CD8-positive, alpha-beta memory T cell (primary cell): ENCODE measurements at regions of chr22 and their contacts with region 1.

Region 1: GRCh38 chr22:46013460-46014416 is 36.8 kb upstream of the WNT7B start:
- DNase-seq: peak; percentile 65 to 90 (median 67)
- H3K4me3 ChIP-seq: peak overlapping the region; percentile 77
- H3K4me3 Mint-ChIP-seq: peak overlapping the region; percentile 88 to 96 (median 90)
- H3K27ac ChIP-seq: peak overlapping the region; percentile 87
- H3K27ac Mint-ChIP-seq: peak overlapping the region; percentile 55 to 99 (median 90)
- H3K4me1 ChIP-seq: peaks cover 5% of the 10 kb centered on the region
- H3K4me1 Mint-ChIP-seq: peaks cover 2 to 12% (median 4%) of the 10 kb centered on the region in 3 donors
- H3K27me3 ChIP-seq: no peaks in the 10 kb centered on the region
- H3K27me3 Mint-ChIP-seq: no peaks in the 10 kb centered on the region

Region 2: GRCh38 chr22:45994491-45995404 is 19.0 kb before region 1 on chr22:
- CTCF ChIA-PET with region 1: interaction called, 68 read pairs
- POLR2A ChIA-PET with region 1: no interaction called
- DNase-seq: peak; percentile 52 to 80 (median 71)
- H3K4me3 ChIP-seq: no peak overlapping the region
- H3K4me3 Mint-ChIP-seq: peak overlapping the region in 1 of 7 donors; percentile 51
- H3K27ac ChIP-seq: no peak overlapping the region
- H3K27ac Mint-ChIP-seq: peak overlapping the region in 6 of 8 donors; percentile 24 to 81 (median 69)
- H3K4me1 ChIP-seq: no peaks in the 10 kb centered on the region
- H3K4me1 Mint-ChIP-seq: peaks cover 6 to 11% (median 9%) of the 10 kb centered on the region in 3 donors
- H3K27me3 ChIP-seq: no peaks in the 10 kb centered on the region
- H3K27me3 Mint-ChIP-seq: peaks cover 5 to 6% of the 10 kb centered on the region in 2 donors

Region 3: DNA sequence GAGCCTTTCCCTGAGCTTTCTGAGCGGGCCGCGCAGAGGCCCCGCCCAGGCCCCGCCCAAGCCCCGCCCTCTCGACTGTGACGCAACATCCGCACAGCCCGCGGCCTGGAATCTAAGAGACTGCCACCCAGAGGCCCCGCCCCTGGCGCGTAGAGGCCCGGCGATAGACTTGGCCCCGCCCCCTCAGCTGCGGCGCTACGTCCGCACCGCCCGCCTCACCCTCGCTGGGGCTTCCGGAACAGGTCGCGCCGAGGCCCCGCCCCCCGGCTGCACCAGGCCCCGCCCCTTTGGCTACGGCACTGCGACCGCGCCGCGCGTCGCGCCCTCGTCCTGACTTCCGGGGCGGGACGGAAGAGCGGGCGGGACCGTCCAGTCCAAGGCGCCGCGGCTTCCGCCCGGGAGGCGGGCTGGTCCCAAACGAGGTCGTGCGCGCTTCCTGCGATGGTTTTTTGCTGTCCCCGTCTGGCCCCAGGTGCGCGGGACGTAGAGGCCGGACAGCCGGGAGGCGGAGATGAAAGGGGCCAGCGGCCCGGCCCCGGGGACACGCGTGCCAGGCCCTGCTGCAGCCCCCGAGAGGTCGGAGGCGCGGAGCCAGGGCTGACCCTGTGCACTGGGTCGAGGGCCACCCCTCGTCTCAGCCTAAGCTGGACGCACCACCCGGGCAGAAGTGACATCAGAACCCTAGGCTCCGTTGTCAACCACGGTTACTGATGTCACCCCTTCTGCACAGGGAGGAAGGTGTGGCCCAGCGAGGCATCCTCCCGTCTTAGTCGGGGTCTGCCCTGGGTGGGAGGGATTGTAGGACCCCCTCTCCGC is 22.2 kb after region 1 on chr22:
- CTCF ChIA-PET with region 1: interaction called, 41 read pairs
- POLR2A ChIA-PET with region 1: interaction called, 39 read pairs
- DNase-seq: peak; percentile 99 to 100 (median 100)
- H3K4me3 ChIP-seq: peak overlapping the region; percentile 76
- H3K4me3 Mint-ChIP-seq: peak overlapping the region; percentile 81 to 91 (median 85)
- H3K27ac ChIP-seq: peak overlapping the region; percentile 89
- H3K27ac Mint-ChIP-seq: peak overlapping the region; percentile 94 to 98 (median 97)
- H3K4me1 ChIP-seq: peaks cover 20% of the 10 kb centered on the region
- H3K4me1 Mint-ChIP-seq: peaks cover 19 to 21% (median 19%) of the 10 kb centered on the region in 3 donors
- H3K27me3 ChIP-seq: no peaks in the 10 kb centered on the region
- H3K27me3 Mint-ChIP-seq: no peaks in the 10 kb centered on the region

Region 4: GRCh38 chr22:46054091-46055073 is 40.6 kb after region 1 on chr22:
- CTCF ChIA-PET with region 1: interaction called, 13 read pairs
- POLR2A ChIA-PET with region 1: interaction called, 3 read pairs
- DNase-seq: peak in 4 of 5 donors; percentile 23 to 63 (median 55)
- H3K4me3 ChIP-seq: peak overlapping the region; percentile 76
- H3K4me3 Mint-ChIP-seq: peak overlapping the region; percentile 85 to 90 (median 88)
- H3K27ac ChIP-seq: peak overlapping the region; percentile 47
- H3K27ac Mint-ChIP-seq: peak overlapping the region; percentile 87 to 95 (median 90)
- H3K4me1 ChIP-seq: peaks cover 57% of the 10 kb centered on the region
- H3K4me1 Mint-ChIP-seq: peaks cover 36 to 63% (median 43%) of the 10 kb centered on the region in 3 donors
- H3K27me3 ChIP-seq: no peaks in the 10 kb centered on the region
- H3K27me3 Mint-ChIP-seq: peaks cover under 1 to 3% of the 10 kb centered on the region in 2 donors

Region 5: DNA sequence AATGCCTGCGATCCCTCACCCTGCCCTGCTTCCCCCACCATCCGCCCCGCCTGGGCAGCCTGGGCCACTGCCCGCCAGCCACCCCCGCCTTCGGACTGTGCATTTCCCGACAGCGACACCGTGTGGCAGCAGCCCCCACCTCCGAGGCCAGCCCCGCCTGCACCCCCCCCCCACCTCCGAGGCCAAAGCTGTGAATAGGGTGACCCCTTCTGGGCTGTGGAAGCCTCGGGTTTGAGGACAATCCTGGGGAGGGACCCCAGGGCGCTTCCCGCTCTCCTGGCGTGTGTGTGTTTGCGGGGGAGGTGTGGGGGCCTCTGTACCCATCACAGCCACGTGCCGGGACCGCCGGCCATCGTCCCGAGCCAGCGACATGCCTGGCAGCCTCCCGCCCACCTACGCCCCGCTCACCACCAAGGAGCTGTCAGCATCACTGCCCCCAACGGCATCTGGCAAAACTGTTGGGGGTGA is 102.8 kb after region 1 on chr22:
- CTCF ChIA-PET with region 1: interaction called, 134 read pairs
- POLR2A ChIA-PET with region 1: no interaction called
- DNase-seq: peak; percentile 68 to 90 (median 79)
- H3K4me3 ChIP-seq: no peak overlapping the region
- H3K4me3 Mint-ChIP-seq: no peak overlapping the region
- H3K27ac ChIP-seq: no peak overlapping the region
- H3K27ac Mint-ChIP-seq: peak overlapping the region in 1 of 8 donors; percentile 14
- H3K4me1 ChIP-seq: no peaks in the 10 kb centered on the region
- H3K4me1 Mint-ChIP-seq: peaks cover 0 to 5% (median 3%) of the 10 kb centered on the region in 3 donors
- H3K27me3 ChIP-seq: no peaks in the 10 kb centered on the region
- H3K27me3 Mint-ChIP-seq: no peaks in the 10 kb centered on the region

Region 6: GRCh38 chr22:46122511-46122971 is 108.8 kb after region 1 on chr22:
- CTCF ChIA-PET with region 1: interaction called, 134 read pairs
- POLR2A ChIA-PET with region 1: no interaction called
- DNase-seq: peak; percentile 49 to 78 (median 61)
- H3K4me3 ChIP-seq: no peak overlapping the region
- H3K4me3 Mint-ChIP-seq: no peak overlapping the region
- H3K27ac ChIP-seq: no peak overlapping the region
- H3K27ac Mint-ChIP-seq: peak overlapping the region in 1 of 8 donors; percentile 65
- H3K4me1 ChIP-seq: no peaks in the 10 kb centered on the region
- H3K4me1 Mint-ChIP-seq: no peaks in the 10 kb centered on the region
- H3K27me3 ChIP-seq: no peaks in the 10 kb centered on the region
- H3K27me3 Mint-ChIP-seq: no peaks in the 10 kb centered on the region